ENCODE measurements at regions of chr5 and their contacts with region 1.

Region 1: DNA sequence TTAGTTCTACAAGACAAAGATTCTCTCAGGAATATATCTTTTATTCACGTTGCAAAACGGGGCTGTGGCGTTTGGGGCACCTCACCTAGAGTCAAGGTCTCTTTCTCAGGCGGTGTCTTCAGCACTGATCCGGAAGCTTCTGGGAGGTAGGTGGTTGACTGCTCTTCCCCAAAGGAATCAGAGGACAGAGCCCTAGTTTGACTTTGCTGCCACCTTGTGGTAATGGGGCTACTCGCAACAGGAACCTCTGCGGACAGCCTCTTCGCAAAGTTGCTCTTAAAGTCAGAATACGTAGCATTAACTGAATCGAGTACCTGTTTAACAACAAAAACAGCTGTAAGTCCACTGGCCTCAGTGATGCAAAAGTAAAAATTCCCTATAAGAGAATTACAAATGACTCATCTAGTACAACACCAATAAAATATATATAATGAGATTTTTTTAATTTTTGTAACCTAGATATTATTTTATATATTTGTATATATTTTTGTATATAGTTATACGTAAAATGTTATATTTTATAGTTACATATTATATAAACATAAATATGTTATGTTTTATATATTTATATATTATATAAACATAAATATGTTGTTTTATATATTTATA is 13.3 kb upstream of the GPX8 start:
- DNase-seq: peak; percentile 89
- ATAC-seq: peak; percentile 67
- H3K4me3 Mint-ChIP-seq: no peak overlapping the region
- H3K27ac Mint-ChIP-seq: no peak overlapping the region
- H3K4me1 Mint-ChIP-seq: peaks cover 13% of the 10 kb centered on the region
- H3K27me3 Mint-ChIP-seq: peaks cover 6% of the 10 kb centered on the region
- CTCF ChIP-seq: peak; percentile 98

Region 2: DNA sequence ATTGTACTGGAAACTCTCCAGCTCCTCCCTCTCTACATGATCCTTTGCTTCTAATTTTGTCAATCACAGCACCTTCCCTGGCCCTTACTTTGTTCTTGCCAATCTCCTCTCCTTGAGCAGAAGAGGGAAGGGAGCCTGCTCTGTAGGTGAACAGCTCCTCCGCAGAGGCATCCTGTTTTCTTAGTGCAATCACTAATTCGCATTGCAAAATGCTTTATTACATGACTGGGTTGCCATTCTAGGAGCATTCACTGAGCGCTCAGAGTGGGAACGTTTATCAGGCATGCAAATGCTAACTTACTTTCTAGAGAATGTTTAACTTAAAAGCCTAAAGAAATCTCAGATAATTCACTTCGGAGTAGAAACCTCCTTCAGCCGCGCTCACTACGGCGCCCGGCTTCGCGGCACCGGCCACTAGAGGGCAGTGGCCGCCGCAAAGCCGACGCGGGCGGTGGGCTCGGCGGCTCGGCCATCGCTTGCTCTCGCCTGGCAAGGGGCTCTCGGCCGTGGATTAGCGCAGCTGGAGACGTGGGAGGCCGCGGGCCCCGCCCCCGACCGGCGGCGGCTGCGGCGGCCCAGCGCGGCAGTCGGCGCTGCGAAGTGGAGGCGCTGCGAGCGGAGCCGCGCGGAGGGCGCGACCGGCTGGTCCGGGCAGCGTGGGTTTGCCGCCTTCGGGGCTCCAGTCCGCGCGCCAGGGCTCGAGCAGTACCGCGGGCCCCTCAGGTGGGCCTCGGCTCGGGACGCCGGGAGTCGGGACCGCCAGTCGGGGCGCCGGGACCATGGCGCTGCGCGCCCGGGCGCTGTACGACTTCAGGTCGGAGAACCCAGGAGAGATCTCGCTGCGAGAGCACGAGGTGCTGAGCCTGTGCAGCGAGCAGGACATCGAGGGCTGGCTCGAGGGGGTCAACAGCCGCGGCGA is 629.2 kb before region 1 on chr5 and contains the start of gene SNX18:
- CTCF ChIA-PET with region 1: interaction called, 3 read pairs
- POLR2A ChIA-PET with region 1: no interaction called
- intact Hi-C with region 1: loop called (anchors 5 kb)
- DNase-seq: peak; percentile 90
- ATAC-seq: peak; percentile 83
- H3K4me3 Mint-ChIP-seq: peak within 1 kb of the TSS; percentile 75
- H3K27ac Mint-ChIP-seq: no peak within 1 kb of the TSS
- H3K4me1 Mint-ChIP-seq: peaks cover 38% of the 10 kb centered on the region
- H3K27me3 Mint-ChIP-seq: peaks cover 3% of the 10 kb centered on the region
- CTCF ChIP-seq: peak; percentile 91
- total RNA-seq, gene SNX18: 5.9 to 6.8 TPM

Region 3: DNA sequence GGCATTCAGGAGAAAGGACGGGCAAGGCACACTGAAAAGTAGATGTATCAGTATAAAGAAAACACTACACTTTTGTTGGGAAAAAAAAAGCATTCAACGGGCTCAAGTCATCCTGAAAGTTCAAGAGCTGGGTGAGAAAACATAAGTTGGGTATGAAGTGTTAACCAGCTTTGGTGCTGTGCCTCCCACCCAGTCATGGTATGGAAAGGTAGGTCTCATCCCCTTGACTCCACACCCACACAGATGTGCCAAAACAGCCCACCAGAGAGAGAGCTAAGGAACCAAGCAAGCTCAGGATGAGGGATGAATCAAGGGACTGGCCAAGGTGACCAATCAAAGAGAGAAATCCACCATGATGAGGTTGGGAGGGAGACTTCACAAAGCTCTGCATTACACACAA is 215.9 kb before region 1 on chr5:
- CTCF ChIA-PET with region 1: interaction called, 11 read pairs
- POLR2A ChIA-PET with region 1: interaction called, 3 read pairs
- intact Hi-C with region 1: no loop called
- DNase-seq: peak; percentile 54
- ATAC-seq: peak; percentile 64
- H3K4me3 Mint-ChIP-seq: no peak overlapping the region
- H3K27ac Mint-ChIP-seq: no peak overlapping the region
- H3K4me1 Mint-ChIP-seq: peaks cover 8% of the 10 kb centered on the region
- H3K27me3 Mint-ChIP-seq: peaks cover 14% of the 10 kb centered on the region
- CTCF ChIP-seq: no peak

Region 4: GRCh38 chr5:55037046-55037771 is 109.4 kb before region 1 on chr5:
- CTCF ChIA-PET with region 1: interaction called, 9 read pairs
- POLR2A ChIA-PET with region 1: no interaction called
- intact Hi-C with region 1: loop called (anchors 10 kb)
- DNase-seq: peak; percentile 89
- ATAC-seq: peak; percentile 94
- H3K4me3 Mint-ChIP-seq: peak overlapping the region; percentile 13
- H3K27ac Mint-ChIP-seq: peak overlapping the region; percentile 84
- H3K4me1 Mint-ChIP-seq: peaks cover 37% of the 10 kb centered on the region
- H3K27me3 Mint-ChIP-seq: no peaks in the 10 kb centered on the region
- CTCF ChIP-seq: no peak

Region 5: DNA sequence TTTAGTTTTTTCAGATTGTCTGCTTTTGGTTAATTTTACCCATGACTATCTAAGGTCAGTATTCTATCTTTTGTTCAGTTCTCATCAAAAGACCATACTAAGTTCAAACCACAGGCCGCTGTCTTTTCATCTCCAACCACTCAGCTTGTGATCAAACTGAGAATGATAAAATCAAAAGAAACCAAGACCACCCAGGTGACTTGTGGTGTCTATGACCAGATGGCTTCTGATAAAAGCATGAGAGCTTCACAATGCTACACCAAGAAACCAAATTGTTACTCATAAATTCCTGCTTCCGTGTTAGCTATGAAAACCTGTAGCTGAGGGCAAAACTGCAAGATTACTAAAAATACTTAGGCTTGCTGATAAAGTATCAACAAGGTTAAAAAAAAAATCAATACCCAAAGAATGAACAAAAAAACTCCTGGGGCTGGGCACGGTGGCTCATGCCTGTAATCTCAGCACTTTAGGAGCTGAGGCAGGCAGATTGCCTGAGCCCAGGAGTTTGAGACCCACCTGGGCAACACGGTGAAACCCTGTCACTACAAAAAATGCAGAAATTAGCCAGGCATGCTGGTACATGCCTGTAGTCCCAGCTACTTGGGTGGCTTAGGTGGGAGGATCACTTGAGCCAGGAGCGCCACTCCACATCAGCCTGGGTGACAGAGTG is 12.5 kb before region 1 on chr5:
- CTCF ChIA-PET with region 1: interaction called, 12 read pairs
- POLR2A ChIA-PET with region 1: no interaction called
- intact Hi-C with region 1: no loop called
- DNase-seq: peak; percentile 86
- ATAC-seq: peak; percentile 90
- H3K4me3 Mint-ChIP-seq: no peak overlapping the region
- H3K27ac Mint-ChIP-seq: peak overlapping the region; percentile 56
- H3K4me1 Mint-ChIP-seq: peaks cover 21% of the 10 kb centered on the region
- H3K27me3 Mint-ChIP-seq: peaks cover 13% of the 10 kb centered on the region
- CTCF ChIP-seq: no peak

Region 6: GRCh38 chr5:55278778-55279177 is 132.1 kb after region 1 on chr5:
- CTCF ChIA-PET with region 1: no interaction called
- POLR2A ChIA-PET with region 1: no interaction called
- intact Hi-C with region 1: no loop called
- DNase-seq: no peak
- ATAC-seq: no peak
- H3K4me3 Mint-ChIP-seq: no peak overlapping the region
- H3K27ac Mint-ChIP-seq: no peak overlapping the region
- H3K4me1 Mint-ChIP-seq: no peaks in the 10 kb centered on the region
- H3K27me3 Mint-ChIP-seq: no peaks in the 10 kb centered on the region
- CTCF ChIP-seq: no peak

Measured in activated CD8-positive, alpha-beta T cell treated with anti-CD3 and anti-CD28 coated beads for 36 hours (primary cell).